Dorsolateral prefrontal cortex (tissue), 120 donors: ENCODE measurements at regions of chr13 and their contacts with region 1.

Region 1: GRCh38 chr13:28658796-28659620 is at the start of gene POMP:
- DNase-seq: peak; percentile 84 to 98 (median 90)
- H3K4me3 ChIP-seq: peak within 1 kb of the TSS; percentile 58 to 100 (median 92)
- H3K27ac ChIP-seq: peak within 1 kb of the TSS; percentile 20 to 98 (median 90)
- H3K27me3 ChIP-seq: no peaks in the 10 kb centered on the region
- CTCF ChIP-seq: peak in 12 of 56 donors; percentile 1 to 38 (median 17)
- total RNA-seq, gene POMP: 39.7 to 71.0 (median 58.2) TPM

Region 2: GRCh38 chr13:28173793-28174192 is 485.2 kb before region 1 on chr13:
- intact Hi-C with region 1: no loop called
- DNase-seq: no peak
- H3K4me3 ChIP-seq: no peak overlapping the region
- H3K27ac ChIP-seq: no peak overlapping the region
- H3K27me3 ChIP-seq: no peaks in the 10 kb centered on the region
- CTCF ChIP-seq: no peak

Region 3: DNA sequence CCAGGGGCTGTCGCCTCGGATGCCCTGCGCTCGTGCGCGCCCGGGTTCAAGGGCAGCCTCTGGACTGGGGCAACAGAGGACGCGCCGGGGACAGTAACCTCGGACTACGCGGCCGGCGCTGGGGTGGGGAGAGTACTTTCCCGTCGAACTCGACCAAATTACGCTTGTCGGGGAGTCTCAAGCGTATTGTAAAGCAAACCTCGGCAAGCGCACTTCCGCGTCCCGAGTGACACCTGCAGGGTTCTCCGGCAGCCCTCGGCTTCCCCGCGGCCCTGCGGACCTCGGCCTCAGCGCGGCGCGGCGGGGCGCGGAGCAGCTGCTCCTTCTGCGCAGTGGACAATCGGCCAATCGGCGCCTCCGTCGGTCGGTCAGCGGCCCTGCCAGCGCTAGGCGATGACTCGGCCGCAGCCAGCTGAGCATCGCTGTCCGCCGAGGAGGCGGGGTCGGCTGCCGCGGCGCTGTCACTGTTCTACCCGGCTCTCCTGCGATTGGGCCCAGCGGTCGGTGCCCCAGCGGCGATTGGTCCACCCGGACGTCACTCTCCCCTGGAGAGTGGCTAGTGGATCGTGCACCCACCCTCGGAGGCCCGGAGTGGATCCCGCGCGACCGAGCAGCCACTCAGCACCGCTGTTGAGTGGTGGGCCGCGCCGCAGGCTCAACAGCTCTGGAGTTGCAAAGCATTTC is 59.7 kb after region 1 on chr13 and contains the start of gene SLC46A3:
- intact Hi-C with region 1: loop called (anchors 5 kb)
- DNase-seq: peak; percentile 98 to 99 (median 99)
- H3K4me3 ChIP-seq: peak within 1 kb of the TSS; percentile 54 to 98 (median 87)
- H3K27ac ChIP-seq: peak within 1 kb of the TSS; percentile 75 to 99 (median 97)
- H3K27me3 ChIP-seq: no peaks in the 10 kb centered on the region
- CTCF ChIP-seq: peak in 44 of 56 donors; percentile 5 to 63 (median 31)
- total RNA-seq, gene SLC46A3: 8.6 to 20.2 (median 13.7) TPM